Cardiac septum (tissue), 1 donor: ENCODE measurements at regions of chr15 and their contacts with region 1.

Region 1: GRCh38 chr15:44066316-44066740 is 128.7 kb downstream of the FRMD5 start:
- DNase-seq: no peak

Region 2: DNA sequence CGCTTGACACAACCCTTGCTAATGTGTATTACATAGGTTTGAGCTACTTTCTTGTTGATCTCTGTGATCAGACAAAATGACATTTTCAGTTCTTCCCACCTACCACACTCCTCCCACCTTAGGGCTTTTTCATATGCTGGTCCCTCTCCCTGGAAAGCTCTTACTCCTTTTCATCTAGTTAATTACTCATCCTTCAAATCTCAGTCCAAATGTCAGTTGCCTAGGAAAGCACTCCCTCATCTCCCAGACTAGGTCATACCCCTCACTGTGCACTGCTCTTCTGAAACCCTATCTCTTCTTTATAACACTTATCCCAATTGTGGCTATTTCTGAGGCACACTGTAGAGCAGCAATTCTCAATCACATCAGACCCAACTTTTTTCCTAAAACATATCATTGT is 1582.7 kb before region 1 on chr15:
- intact Hi-C with region 1: no loop called
- DNase-seq: no peak

Region 3: GRCh38 chr15:43872416-43873020 is 193.8 kb before region 1 on chr15:
- intact Hi-C with region 1: loop called (anchors 5 kb)
- DNase-seq: no peak

Region 4: GRCh38 chr15:43903864-43904290 is 162.5 kb before region 1 on chr15:
- intact Hi-C with region 1: loop called (anchors 1 kb)
- DNase-seq: no peak

Region 5: GRCh38 chr15:43915631-43916325 is 150.6 kb before region 1 on chr15:
- intact Hi-C with region 1: no loop called
- DNase-seq: no peak